Aorta (tissue), 5 donors: ENCODE measurements at regions of chr17 and their contacts with region 1.

Region 1: DNA sequence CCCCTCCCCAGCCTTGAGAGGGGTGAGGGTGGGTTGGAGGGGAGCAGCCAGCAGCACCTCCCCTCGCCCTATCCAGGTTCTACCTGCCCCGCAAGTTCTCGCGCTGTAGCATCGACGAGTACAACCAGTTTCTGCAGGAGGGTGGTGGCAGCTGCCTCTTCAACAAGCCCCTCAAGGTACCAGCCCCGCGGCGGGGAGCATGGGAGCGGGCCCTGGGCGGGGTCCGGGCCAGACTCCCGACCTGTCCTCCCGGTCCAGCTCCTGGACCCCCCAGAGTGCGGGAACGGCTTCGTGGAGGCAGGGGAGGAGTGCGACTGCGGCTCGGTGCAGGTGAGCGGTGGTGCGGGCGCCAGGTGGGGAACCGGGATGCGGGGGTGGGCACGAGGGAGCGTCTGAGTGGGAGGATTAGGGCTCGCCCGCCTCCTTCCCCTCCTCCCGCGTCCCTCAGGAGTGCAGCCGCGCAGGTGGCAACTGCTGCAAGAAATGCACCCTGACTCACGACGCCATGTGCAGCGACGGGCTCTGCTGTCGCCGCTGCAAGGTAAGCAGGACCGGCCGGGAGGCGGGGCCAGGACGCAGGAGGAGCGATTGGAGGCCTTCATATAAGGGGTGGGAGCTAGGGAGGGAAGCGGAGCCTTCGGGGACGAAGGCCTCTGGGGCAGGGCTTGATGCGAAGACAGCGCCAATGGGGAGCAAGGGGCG is 16.5 kb downstream of the ADAM11 start:
- DNase-seq: peak; percentile 98
- ATAC-seq: peak; percentile 95
- H3K4me3 ChIP-seq: peak overlapping the region in 1 of 2 donors; percentile 3
- H3K27ac ChIP-seq: no peak overlapping the region
- H3K4me1 ChIP-seq: no peaks in the 10 kb centered on the region
- H3K27me3 ChIP-seq: no peaks in the 10 kb centered on the region

Region 2: DNA sequence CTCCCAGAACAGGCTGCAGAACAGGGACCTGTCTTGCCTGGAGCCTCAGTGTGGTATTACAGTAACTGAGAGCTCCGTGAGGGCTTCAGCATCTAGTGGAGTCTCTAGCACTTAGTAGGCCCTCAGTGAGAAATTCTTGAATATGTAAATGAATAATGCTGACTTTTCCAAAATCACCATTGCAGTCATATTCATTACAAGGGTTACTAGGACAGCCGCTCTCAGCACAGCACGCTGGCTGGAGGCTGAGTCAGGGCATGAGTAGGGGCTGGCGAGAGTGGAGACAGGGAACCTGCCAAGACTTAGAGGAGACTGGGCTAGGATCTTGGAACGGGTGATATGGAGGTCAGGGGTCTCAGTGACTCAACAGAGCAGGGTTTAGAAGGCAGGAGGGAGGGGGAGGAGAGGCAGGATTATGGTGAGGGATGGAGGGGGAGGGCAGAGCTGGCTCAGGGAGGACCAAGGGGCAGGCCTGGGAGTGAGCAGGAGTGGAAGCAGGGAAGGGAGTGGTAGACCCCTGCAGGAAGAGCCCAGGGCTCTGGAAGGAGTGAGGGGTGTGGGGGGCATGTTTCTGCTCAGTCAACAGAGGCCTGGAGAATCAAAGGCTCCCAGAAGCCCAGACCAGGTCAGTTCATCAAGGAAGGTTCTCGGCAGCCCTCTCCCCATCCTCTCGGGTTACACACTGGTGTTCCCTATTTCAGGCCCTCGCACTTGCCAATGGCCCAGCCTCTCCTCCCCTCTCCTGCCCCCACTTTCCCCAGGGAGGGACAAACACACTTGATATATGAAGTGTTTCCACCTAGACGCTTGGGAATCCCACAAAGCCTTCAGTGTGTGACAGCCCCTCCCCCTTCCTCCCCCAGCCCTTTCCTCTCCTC is 175.8 kb before region 1 on chr17:
- intact Hi-C with region 1: no loop called
- DNase-seq: peak; percentile 93
- ATAC-seq: peak; percentile 92
- H3K4me3 ChIP-seq: no peak overlapping the region
- H3K27ac ChIP-seq: peak overlapping the region in 1 of 2 donors; percentile 47
- H3K4me1 ChIP-seq: no peaks in the 10 kb centered on the region
- H3K27me3 ChIP-seq: no peaks in the 10 kb centered on the region

Region 3: GRCh38 chr17:44655983-44656710 is 119.1 kb before region 1 on chr17 and contains the start of gene MEIOC:
- intact Hi-C with region 1: no loop called
- DNase-seq: no peak
- ATAC-seq: no peak
- H3K4me3 ChIP-seq: no peak within 1 kb of the TSS
- H3K27ac ChIP-seq: no peak within 1 kb of the TSS
- H3K4me1 ChIP-seq: no peaks in the 10 kb centered on the region
- H3K27me3 ChIP-seq: no peaks in the 10 kb centered on the region
- total RNA-seq, gene MEIOC: not detected

Region 4: DNA sequence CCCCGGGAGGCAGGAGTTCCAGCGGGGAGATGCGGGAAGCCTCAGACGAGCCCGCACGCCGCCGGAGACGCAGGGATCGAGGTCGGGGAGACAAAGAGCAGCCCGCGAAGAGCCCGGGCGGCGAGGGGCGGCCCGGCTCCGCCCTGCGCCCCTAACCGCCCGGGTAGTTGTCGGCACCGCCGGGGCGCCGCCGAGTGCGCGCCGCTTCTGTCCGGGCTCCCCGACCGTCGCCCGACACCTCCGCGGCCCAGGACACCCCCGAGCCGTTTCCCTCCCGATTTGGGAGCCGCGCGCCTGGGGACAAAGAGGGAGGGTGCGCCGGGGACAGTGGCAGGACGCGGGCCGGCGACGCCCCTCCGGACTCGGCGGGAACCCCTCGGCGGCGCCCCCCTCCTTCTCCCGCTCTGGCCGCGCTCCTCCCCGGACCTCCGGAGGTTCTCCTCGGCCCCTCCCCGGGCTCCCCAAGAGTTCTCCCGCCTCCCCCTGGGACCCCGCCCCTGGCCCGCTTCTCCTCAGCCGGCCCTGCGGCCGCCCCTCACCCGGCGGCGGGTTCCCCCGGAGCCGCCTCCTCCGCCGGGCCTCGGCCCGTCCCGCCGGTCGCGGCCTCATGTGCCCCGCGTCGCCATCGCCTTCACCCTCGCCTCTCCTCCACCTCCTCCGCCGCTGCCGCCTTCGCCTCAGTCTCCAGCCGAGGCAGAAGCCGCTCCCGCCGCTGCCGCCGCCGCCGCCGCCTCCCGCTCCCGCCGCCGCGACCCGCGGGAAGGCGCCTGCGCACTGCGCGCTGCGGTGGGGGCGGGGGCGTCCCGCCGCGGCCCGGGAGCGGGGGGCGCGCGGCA is 54.5 kb after region 1 on chr17 and contains the start of gene GJC1:
- intact Hi-C with region 1: loop called (anchors 2 to 5 kb)
- DNase-seq: peak; percentile 50 to 86
- ATAC-seq: peak; percentile 67
- H3K4me3 ChIP-seq: peak within 1 kb of the TSS; percentile 29 to 89
- H3K27ac ChIP-seq: peak within 1 kb of the TSS; percentile 15 to 24
- H3K4me1 ChIP-seq: peaks cover 0 to 4% of the 10 kb centered on the region in 2 donors
- H3K27me3 ChIP-seq: no peaks in the 10 kb centered on the region
- total RNA-seq, gene GJC1: 23.8 to 34.3 TPM

Region 5: GRCh38 chr17:44864866-44865660 is 89.8 kb after region 1 on chr17:
- intact Hi-C with region 1: loop called (anchors 2 kb)
- DNase-seq: peak; percentile 63 to 79
- ATAC-seq: peak; percentile 72
- H3K4me3 ChIP-seq: no peak overlapping the region
- H3K27ac ChIP-seq: no peak overlapping the region
- H3K4me1 ChIP-seq: no peaks in the 10 kb centered on the region
- H3K27me3 ChIP-seq: no peaks in the 10 kb centered on the region

Region 6: GRCh38 chr17:45021607-45022287 is 246.5 kb after region 1 on chr17:
- intact Hi-C with region 1: loop called (anchors 2 to 10 kb)
- DNase-seq: peak; percentile 79 to 92
- ATAC-seq: peak; percentile 91
- H3K4me3 ChIP-seq: no peak overlapping the region
- H3K27ac ChIP-seq: no peak overlapping the region
- H3K4me1 ChIP-seq: no peaks in the 10 kb centered on the region
- H3K27me3 ChIP-seq: no peaks in the 10 kb centered on the region

Region 7: GRCh38 chr17:45923511-45924268 is 1148.4 kb after region 1 on chr17:
- intact Hi-C with region 1: no loop called
- DNase-seq: no peak
- ATAC-seq: no peak
- H3K4me3 ChIP-seq: no peak overlapping the region
- H3K27ac ChIP-seq: no peak overlapping the region
- H3K4me1 ChIP-seq: no peaks in the 10 kb centered on the region
- H3K27me3 ChIP-seq: no peaks in the 10 kb centered on the region